Activated naive CD4-positive, alpha-beta T cell treated with anti-CD3 and anti-CD28 coated beads for 36 hours (primary cell): ENCODE measurements at regions of chr2 and their contacts with region 1.

Region 1: DNA sequence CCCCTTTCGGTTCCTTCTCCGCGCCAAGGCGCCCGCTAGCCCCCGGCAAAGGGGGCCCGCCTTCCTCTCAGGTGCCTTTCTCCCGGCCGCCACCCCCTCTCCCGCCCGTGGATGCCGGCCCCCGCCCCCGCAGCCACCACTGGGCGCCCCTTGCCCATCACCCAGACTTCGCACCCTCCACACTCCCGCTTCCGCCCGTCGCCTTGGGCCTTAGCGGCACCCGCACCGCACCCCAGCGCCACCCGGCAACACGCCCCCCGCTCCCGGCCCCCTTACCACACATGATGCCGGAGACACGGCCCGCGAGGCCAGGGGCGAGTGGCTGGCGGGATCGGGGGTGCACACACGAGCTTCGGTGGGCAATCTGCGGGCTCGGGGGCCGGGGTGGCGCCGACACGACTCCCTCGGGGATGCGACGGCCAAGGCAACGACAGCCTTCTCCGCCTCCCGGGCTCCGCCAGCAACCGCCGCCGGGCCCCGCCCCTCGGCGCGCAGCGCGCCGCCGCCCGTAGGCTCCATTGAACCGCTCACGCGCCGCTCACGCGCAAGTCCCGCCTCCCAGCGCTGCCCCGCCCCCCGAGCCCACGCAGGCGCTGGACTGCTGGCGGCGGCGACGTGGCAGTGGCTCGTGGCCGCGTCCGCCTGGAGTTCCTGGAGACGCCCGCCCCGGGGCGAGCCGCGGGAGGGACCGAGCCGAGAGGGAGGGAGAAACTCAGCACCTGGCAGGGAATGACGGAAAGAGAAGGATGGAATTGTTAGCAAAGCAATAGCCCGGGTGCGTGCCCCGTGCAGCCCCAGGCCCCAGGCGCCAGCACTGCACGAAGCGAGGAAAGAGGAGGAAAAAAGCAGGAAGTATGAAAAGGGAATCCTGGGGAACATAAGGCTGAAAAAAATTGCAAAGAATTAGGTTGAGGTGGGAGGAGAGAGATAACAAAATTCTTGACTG is at the start of gene GFPT1:
- DNase-seq: peak; percentile 93
- H3K4me3 Mint-ChIP-seq: peak within 1 kb of the TSS; percentile 93
- H3K27ac Mint-ChIP-seq: peak within 1 kb of the TSS; percentile 83
- H3K4me1 Mint-ChIP-seq: peaks cover 42% of the 10 kb centered on the region
- H3K27me3 Mint-ChIP-seq: no peaks in the 10 kb centered on the region
- total RNA-seq, gene GFPT1: 34.6 to 36.0 TPM

Region 2: DNA sequence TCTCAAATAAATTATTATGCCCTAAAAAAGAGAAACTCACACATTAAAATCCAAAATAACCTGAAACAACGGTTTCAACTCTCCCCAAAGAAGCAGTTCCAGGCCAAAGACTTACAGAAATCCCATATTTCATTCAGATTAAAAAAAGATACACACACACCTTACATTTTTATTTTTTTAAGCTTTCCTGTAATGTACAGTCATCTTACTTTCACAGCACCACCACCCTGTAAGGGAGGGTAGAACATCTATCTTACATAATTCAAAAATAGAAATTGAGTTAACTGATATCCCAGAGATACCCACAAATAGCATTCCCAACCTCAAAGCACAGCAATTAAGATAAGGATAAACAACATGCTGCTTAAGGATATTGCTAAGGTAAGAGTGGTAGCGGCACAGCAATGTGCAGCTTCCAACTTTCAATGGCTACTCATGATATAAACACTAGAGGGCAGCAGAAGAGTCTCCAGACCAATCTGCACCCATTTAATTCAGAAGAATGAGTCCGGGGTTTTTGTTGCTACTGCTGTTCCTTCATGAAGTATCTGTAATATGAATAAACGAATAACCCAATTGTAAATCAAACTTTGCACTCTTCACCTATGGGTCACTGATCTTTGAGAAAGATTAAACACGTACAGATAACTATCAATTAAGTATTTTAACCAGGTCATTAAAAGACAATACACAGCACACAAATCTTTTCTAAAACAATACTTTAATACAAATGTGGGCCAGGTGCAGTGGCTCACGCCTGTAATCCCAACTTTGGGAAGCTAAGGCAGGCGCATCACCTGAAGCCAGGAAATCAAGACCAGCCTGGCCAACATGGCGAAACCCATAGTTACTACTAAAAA is 11.3 kb before region 1 on chr2:
- CTCF ChIA-PET with region 1: interaction called, 11 read pairs
- intact Hi-C with region 1: no loop called
- DNase-seq: no peak
- H3K4me3 Mint-ChIP-seq: no peak overlapping the region
- H3K27ac Mint-ChIP-seq: no peak overlapping the region
- H3K4me1 Mint-ChIP-seq: peaks cover 15% of the 10 kb centered on the region
- H3K27me3 Mint-ChIP-seq: no peaks in the 10 kb centered on the region

Region 3: DNA sequence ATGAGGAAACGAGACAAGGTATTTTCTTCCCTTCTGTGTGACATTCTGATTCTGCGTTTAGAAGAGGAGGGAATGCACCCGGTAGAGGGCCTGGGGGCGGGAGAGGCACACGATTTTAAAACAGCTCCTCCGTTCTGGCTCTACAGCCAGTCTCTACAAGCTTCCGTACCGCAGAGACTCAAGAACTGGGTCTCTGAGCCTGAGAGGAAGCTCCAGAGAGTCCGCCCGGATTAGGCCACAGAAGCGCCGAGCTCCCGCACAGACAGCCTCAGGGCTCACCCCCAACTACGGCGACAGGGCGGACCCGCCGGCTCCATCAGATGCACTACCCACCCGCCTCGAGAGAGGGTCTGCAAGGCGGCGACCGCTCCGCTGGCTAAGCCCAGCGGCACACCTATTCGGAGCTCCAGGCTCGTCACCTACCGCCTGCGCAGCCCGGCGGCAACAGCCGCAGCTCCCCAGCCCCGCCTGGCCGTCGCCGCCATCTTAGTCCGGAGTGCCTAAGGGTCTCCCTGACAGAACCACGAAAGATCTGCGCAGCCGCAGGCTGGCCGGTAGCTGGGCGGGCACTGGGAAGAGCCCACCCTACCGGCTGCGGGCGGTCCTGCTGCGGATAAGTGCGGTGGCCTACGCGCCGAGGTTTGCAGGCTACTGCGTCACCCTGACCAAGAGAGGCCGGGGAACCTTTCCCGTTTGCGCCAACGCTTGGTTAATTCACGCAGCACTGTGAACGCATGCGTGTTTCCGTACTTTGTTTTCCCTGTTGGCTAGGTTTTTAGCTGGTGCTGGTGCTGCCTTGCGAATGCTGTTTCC is 50.1 kb after region 1 on chr2 and contains the start of gene NFU1:
- CTCF ChIA-PET with region 1: interaction called, 3 read pairs
- intact Hi-C with region 1: loop called (anchors 1 kb)
- DNase-seq: peak; percentile 90
- H3K4me3 Mint-ChIP-seq: peak within 1 kb of the TSS; percentile 95
- H3K27ac Mint-ChIP-seq: peak within 1 kb of the TSS; percentile 94
- H3K4me1 Mint-ChIP-seq: peaks cover 29% of the 10 kb centered on the region
- H3K27me3 Mint-ChIP-seq: no peaks in the 10 kb centered on the region
- total RNA-seq, gene NFU1: 35.7 to 39.3 TPM

Region 4: DNA sequence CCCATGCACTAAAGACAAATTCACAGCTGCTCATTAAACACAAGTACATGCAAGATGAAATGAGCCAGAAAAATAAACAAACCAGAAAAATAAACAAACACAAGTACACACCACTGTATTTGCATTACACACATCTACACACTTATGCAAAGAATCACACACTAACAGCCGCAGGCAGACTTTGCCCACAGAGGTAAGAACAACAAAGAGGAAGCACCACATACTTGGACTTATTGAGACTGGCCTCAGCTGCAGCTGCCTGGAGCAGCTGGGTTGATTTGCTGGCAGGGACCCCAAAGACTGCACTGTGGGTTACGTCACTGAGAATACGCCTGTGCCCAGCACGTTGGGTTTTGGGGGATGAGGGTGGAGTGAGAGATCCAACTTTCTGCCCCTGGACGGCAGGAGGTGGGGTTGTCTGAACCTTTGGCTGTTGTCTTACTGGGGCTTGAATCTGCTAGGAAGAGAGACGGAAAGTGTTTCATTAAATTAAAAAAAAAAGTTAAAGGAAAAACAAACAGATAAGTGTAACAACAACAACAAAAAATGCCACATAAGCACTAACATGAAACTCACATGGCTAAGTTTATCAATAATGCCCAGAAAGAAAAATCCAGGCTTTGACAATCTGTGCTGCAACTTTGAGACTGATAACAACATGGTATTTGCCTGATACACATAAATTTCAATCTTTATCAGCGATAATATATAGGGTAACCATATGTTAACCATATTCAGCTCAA is 122.1 kb after region 1 on chr2:
- CTCF ChIA-PET with region 1: no interaction called
- intact Hi-C with region 1: loop called (anchors 5 kb)
- DNase-seq: no peak
- H3K4me3 Mint-ChIP-seq: no peak overlapping the region
- H3K27ac Mint-ChIP-seq: no peak overlapping the region
- H3K4me1 Mint-ChIP-seq: peaks cover 35% of the 10 kb centered on the region
- H3K27me3 Mint-ChIP-seq: no peaks in the 10 kb centered on the region

Region 5: GRCh38 chr2:69741619-69742466 is 354.8 kb after region 1 on chr2 and contains the start of gene ANXA4:
- CTCF ChIA-PET with region 1: interaction called, 10 read pairs
- intact Hi-C with region 1: no loop called
- DNase-seq: peak; percentile 78
- H3K4me3 Mint-ChIP-seq: peak within 1 kb of the TSS; percentile 75
- H3K27ac Mint-ChIP-seq: peak within 1 kb of the TSS; percentile 78
- H3K4me1 Mint-ChIP-seq: peaks cover 12% of the 10 kb centered on the region
- H3K27me3 Mint-ChIP-seq: no peaks in the 10 kb centered on the region
- total RNA-seq, gene ANXA4: 21.4 to 23.9 TPM